OCI-LY7 (cell line): ENCODE measurements at regions of chr22 and their contacts with region 1.

Region 1: DNA sequence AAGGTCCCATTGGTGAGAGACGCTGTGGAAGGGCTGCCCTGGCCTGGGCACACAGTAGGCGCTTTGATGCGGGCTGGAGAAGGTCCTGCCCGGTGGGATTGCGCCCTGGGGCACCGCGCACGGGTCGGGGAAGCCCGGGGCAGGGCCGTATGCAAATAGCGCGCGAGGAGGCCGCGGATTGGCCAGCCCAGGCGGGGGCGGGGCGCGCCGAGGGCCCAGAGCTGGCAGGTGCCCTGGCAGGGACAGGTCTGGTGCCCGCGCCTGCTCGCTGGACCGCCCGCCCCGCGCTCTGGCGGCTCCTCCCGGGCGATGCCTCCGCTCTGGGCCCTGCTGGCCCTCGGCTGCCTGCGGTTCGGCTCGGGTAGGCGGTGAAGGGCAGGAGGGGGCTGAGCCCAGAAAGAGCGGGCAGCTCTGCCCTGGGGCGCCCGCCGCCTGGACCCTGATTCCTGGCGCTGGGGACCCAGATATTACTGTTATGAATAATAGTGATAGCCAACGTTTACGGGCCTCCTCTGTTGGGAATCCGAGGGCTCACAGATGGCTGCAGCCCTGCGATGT is at the start of gene UPK3A:
- DNase-seq: no peak
- H3K4me3 ChIP-seq: no peak within 1 kb of the TSS
- H3K27ac ChIP-seq: no peak within 1 kb of the TSS
- H3K4me1 ChIP-seq: peaks cover 23% of the 10 kb centered on the region
- CTCF ChIP-seq: no peak
- total RNA-seq, gene UPK3A: not detected in 2 replicates

Region 2: GRCh38 chr22:45309472-45310227 is 24.9 kb after region 1 on chr22 and contains the start of gene FAM118A:
- CTCF ChIA-PET with region 1: no interaction called
- POLR2A ChIA-PET with region 1: interaction called, 3 read pairs
- intact Hi-C with region 1: loop called (anchors 2 kb)
- DNase-seq: peak; percentile 95
- H3K4me3 ChIP-seq: peak within 1 kb of the TSS; percentile 99
- H3K27ac ChIP-seq: peak within 1 kb of the TSS; percentile 59
- H3K4me1 ChIP-seq: peaks cover 22% of the 10 kb centered on the region
- CTCF ChIP-seq: no peak
- total RNA-seq, gene FAM118A: 15.9 and 27.6 TPM in 2 replicates

Region 3: DNA sequence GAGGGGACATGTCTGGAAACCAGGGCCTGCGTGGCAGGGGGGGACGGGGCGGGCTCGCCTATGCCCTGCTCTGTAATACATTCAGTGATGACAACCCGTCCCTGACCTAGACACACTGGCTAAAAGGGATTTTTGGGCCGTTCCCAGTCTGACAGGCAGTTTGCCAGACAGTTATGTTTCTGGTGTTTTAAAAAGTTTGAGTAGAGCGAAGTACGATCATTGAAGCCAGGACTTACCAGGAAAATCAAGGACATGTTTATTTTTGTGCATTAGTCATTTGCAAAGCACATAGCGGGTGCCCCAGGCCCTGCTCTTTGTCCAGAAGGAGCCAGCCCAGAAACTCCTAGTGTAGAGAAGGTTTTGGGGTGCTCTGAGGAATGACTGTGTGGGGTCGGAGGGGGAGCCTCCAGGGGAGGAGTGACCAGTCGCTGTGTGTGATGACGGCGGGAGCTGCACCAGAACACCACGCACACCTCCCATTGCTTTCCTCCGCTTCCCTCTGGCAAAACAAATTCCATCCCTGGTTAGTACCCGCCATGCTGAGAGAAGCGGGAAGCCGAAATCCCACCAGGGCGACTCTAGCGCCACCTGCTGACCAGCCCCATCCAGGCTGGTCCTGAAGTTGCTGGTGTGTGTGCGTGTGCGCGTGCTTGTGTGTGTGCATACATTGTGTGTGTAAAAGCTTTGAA is 268.7 kb after region 1 on chr22:
- CTCF ChIA-PET with region 1: no interaction called
- POLR2A ChIA-PET with region 1: no interaction called
- intact Hi-C with region 1: no loop called
- DNase-seq: peak; percentile 62
- H3K4me3 ChIP-seq: no peak overlapping the region
- H3K27ac ChIP-seq: no peak overlapping the region
- H3K4me1 ChIP-seq: no peaks in the 10 kb centered on the region
- CTCF ChIP-seq: peak; percentile 92